ENCODE measurements at regions of chr15 and their contacts with region 1.

Region 1: DNA sequence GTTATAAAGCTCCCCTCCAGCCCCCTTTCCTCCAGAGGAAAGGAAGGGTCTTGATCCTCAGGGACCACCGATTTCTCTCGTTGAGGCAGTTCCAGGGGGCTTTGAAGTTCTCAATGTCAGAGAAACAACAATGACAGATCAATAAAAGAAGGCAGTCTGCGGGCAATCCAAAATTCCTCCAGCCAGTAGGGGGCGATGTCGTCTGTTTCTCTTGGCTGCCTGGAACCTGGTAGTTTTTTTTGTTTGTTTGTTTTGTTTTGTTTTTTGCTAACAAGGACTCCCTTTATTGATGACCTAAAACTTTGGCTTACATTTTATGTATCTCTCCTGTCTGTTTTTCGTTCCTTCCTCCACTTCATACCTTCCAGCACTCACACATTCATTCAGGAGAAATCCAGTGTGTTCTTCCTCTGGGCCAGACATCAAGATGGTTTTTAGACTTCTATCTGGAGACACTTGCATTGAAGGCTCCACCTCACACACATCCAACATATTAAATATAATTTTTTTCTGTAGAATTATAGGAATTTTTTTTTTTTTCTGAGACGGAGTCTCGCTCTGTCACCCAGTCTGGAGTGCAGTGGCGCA is 276.6 kb downstream of the RPLP1 start:
- DNase-seq: no peak
- ATAC-seq: no peak
- H3K4me3 ChIP-seq: no peak overlapping the region
- H3K27ac ChIP-seq: no peak overlapping the region
- H3K4me1 ChIP-seq: no peaks in the 10 kb centered on the region
- H3K27me3 ChIP-seq: no peaks in the 10 kb centered on the region
- CTCF ChIP-seq: peak; percentile 25 to 77 (median 61)
- POLR2A ChIP-seq: no peak

Region 2: GRCh38 chr15:70362886-70363285 is 633.6 kb after region 1 on chr15:
- in situ Hi-C with region 1: no loop called
- intact Hi-C with region 1: loop called (anchors 5 kb)
- DNase-seq: no peak
- ATAC-seq: no peak
- H3K4me3 ChIP-seq: no peak overlapping the region
- H3K27ac ChIP-seq: no peak overlapping the region
- H3K4me1 ChIP-seq: no peaks in the 10 kb centered on the region
- H3K27me3 ChIP-seq: no peaks in the 10 kb centered on the region
- CTCF ChIP-seq: peak in 4 of 5 experiments; percentile 33 to 57 (median 54)
- POLR2A ChIP-seq: no peak